ENCODE measurements at regions of chr3 and their contacts with region 1.

Region 1: DNA sequence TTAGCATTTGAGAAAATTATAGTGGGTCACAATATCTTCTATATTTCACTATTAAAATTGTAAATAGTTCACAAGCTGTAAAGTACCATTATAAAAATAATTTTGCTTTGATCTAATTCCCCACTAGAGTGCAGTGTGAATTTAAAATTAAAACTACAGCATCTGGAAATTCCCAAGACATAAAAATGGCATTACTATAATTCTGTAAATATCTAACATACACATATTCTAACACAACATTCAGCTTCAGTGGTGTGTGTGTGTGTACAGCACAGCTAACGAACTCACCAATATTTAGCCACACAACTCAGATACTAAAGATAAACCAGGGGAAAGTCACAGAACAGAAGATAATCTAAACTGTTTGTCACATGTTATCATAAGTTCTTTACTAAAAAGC is 424.9 kb upstream of the ZNF385D start:
- DNase-seq: peak; percentile 2
- ATAC-seq: no peak
- H3K4me3 ChIP-seq: no peak overlapping the region
- H3K27ac ChIP-seq: no peak overlapping the region
- H3K4me1 ChIP-seq: no peaks in the 10 kb centered on the region
- H3K27me3 ChIP-seq: no peaks in the 10 kb centered on the region
- CTCF ChIP-seq: no peak; the same call in 1 of the 2 replicates

Region 2: GRCh38 chr3:22322861-22323260 is 146.9 kb after region 1 on chr3:
- CTCF ChIA-PET with region 1: no interaction called
- POLR2A ChIA-PET with region 1: no interaction called
- in situ Hi-C with region 1: no loop called
- intact Hi-C with region 1: no loop called
- DNase-seq: no peak
- ATAC-seq: no peak
- H3K4me3 ChIP-seq: no peak overlapping the region
- H3K27ac ChIP-seq: no peak overlapping the region
- H3K4me1 ChIP-seq: no peaks in the 10 kb centered on the region
- H3K27me3 ChIP-seq: no peaks in the 10 kb centered on the region
- CTCF ChIP-seq: no peak

Region 3: GRCh38 chr3:22360970-22361369 is 185.0 kb after region 1 on chr3:
- CTCF ChIA-PET with region 1: no interaction called
- POLR2A ChIA-PET with region 1: no interaction called
- in situ Hi-C with region 1: no loop called
- intact Hi-C with region 1: no loop called
- DNase-seq: no peak
- ATAC-seq: no peak
- H3K4me3 ChIP-seq: no peak overlapping the region
- H3K27ac ChIP-seq: no peak overlapping the region
- H3K4me1 ChIP-seq: no peaks in the 10 kb centered on the region
- H3K27me3 ChIP-seq: no peaks in the 10 kb centered on the region
- CTCF ChIP-seq: no peak

Region 4: GRCh38 chr3:22555753-22556435 is 379.9 kb after region 1 on chr3:
- CTCF ChIA-PET with region 1: no interaction called
- POLR2A ChIA-PET with region 1: no interaction called
- in situ Hi-C with region 1: no loop called
- intact Hi-C with region 1: loop called (anchors 10 kb)
- DNase-seq: no peak
- ATAC-seq: no peak
- H3K4me3 ChIP-seq: no peak overlapping the region
- H3K27ac ChIP-seq: no peak overlapping the region
- H3K4me1 ChIP-seq: no peaks in the 10 kb centered on the region
- H3K27me3 ChIP-seq: no peaks in the 10 kb centered on the region
- CTCF ChIP-seq: no peak

Region 5: DNA sequence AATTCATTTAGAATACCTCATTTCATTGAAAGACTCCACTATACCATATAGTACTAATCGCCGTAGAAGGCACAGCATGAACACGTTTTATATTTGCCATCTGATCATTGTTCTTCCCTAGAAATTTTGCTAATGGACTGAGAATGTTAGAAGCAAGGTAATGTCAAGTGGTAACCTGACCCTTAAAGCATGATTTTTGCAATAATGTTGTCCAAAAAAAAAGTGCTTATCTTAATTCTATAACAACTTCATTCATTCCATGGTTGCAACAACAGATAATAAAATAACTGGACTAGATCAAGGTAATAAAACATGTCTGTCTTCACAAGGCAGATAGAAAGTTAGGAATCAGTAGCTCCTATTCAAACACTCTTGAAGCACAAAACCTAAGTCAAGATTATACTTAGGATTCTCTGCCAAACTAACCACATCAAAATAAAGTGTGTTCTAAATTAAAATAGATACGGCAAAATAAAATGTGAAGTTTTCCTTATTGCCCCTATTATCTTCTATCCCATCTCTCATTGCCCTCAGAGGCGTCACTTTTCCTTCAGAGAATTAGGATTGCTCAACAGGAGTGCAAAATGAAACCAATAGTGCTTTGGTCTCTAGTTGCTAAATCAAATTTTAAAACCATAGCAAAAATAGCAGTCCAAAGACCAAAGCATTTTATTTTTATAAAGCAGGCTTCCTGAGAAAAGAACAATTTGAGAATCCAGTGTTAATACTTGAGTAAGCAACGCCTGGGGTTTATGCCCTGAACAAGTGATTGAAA is 709.8 kb after region 1 on chr3:
- CTCF ChIA-PET with region 1: no interaction called
- POLR2A ChIA-PET with region 1: no interaction called
- in situ Hi-C with region 1: no loop called
- intact Hi-C with region 1: no loop called
- DNase-seq: no peak
- ATAC-seq: no peak
- H3K4me3 ChIP-seq: no peak overlapping the region
- H3K27ac ChIP-seq: no peak overlapping the region
- H3K4me1 ChIP-seq: no peaks in the 10 kb centered on the region
- H3K27me3 ChIP-seq: no peaks in the 10 kb centered on the region
- CTCF ChIP-seq: no peak